PC-3 (cell line): ENCODE measurements at regions of chr12 and their contacts with region 1.

Region 1: GRCh38 chr12:110826592-110827200 is 20.1 kb upstream of the CCDC63 start:
- DNase-seq: peak; percentile 94
- ATAC-seq: peak; percentile 98
- H3K4me3 ChIP-seq: no peak overlapping the region
- H3K27ac ChIP-seq: no peak overlapping the region
- H3K4me1 ChIP-seq: no peaks in the 10 kb centered on the region
- H3K27me3 ChIP-seq: no peaks in the 10 kb centered on the region
- CTCF ChIP-seq: peak; percentile 97

Region 2: GRCh38 chr12:110421159-110421661 is 405.5 kb before region 1 on chr12:
- CTCF ChIA-PET with region 1: no interaction called
- POLR2A ChIA-PET with region 1: no interaction called
- intact Hi-C with region 1: no loop called
- DNase-seq: no peak
- ATAC-seq: no peak
- H3K4me3 ChIP-seq: no peak overlapping the region
- H3K27ac ChIP-seq: no peak overlapping the region
- H3K4me1 ChIP-seq: no peaks in the 10 kb centered on the region
- H3K27me3 ChIP-seq: no peaks in the 10 kb centered on the region
- CTCF ChIP-seq: no peak

Region 3: GRCh38 chr12:110449799-110450497 is 376.7 kb before region 1 on chr12 and contains the start of gene ARPC3:
- CTCF ChIA-PET with region 1: no interaction called
- POLR2A ChIA-PET with region 1: no interaction called
- intact Hi-C with region 1: loop called (anchors 2 kb)
- DNase-seq: peak; percentile 97
- ATAC-seq: peak; percentile 96
- H3K4me3 ChIP-seq: peak within 1 kb of the TSS; percentile 94
- H3K27ac ChIP-seq: peak within 1 kb of the TSS; percentile 75
- H3K4me1 ChIP-seq: 0 out of 2 replicates have a peak, but pooled peaks cover 5% of the 10 kb centered on the region
- H3K27me3 ChIP-seq: no peaks in the 10 kb centered on the region
- CTCF ChIP-seq: peak; percentile 82
- total RNA-seq, gene ARPC3: 202 and 292 TPM in 2 replicates

Region 4: GRCh38 chr12:110613771-110614684 is 212.7 kb before region 1 on chr12 and contains the start of gene TCTN1:
- CTCF ChIA-PET with region 1: no interaction called
- POLR2A ChIA-PET with region 1: no interaction called
- intact Hi-C with region 1: loop called (anchors 5 kb)
- DNase-seq: peak; percentile 97
- ATAC-seq: peak; percentile 99
- H3K4me3 ChIP-seq: peak within 1 kb of the TSS; percentile 75
- H3K27ac ChIP-seq: 0 out of 2 replicates have a peak within 1 kb of the TSS, but pooled peaks have one; percentile 1
- H3K4me1 ChIP-seq: peaks cover 9% of the 10 kb centered on the region
- H3K27me3 ChIP-seq: no peaks in the 10 kb centered on the region
- CTCF ChIP-seq: no peak
- total RNA-seq, gene TCTN1: 40.0 and 40.6 TPM in 2 replicates

Region 5: GRCh38 chr12:110704748-110705147 is 121.9 kb before region 1 on chr12:
- CTCF ChIA-PET with region 1: interaction called, 10 read pairs
- POLR2A ChIA-PET with region 1: no interaction called
- intact Hi-C with region 1: loop called (anchors 1 kb)
- DNase-seq: peak; percentile 68
- ATAC-seq: peak; percentile 86
- H3K4me3 ChIP-seq: peak overlapping the region; percentile 7; the same call in 1 of the 2 replicates
- H3K27ac ChIP-seq: no peak overlapping the region
- H3K4me1 ChIP-seq: 0 out of 2 replicates have a peak, but pooled peaks cover 3% of the 10 kb centered on the region
- H3K27me3 ChIP-seq: no peaks in the 10 kb centered on the region
- CTCF ChIP-seq: peak; percentile 82

Region 6: GRCh38 chr12:110742718-110743570 is 83.8 kb before region 1 on chr12 and contains the start of gene PPP1CC:
- CTCF ChIA-PET with region 1: no interaction called
- POLR2A ChIA-PET with region 1: no interaction called
- intact Hi-C with region 1: loop called (anchors 2 kb)
- DNase-seq: peak; percentile 96
- ATAC-seq: peak; percentile 51
- H3K4me3 ChIP-seq: peak within 1 kb of the TSS; percentile 87
- H3K27ac ChIP-seq: peak within 1 kb of the TSS; percentile 48
- H3K4me1 ChIP-seq: peaks cover 51% of the 10 kb centered on the region
- H3K27me3 ChIP-seq: no peaks in the 10 kb centered on the region
- CTCF ChIP-seq: no peak
- total RNA-seq, gene PPP1CC: 202 and 204 TPM in 2 replicates

Region 7: DNA sequence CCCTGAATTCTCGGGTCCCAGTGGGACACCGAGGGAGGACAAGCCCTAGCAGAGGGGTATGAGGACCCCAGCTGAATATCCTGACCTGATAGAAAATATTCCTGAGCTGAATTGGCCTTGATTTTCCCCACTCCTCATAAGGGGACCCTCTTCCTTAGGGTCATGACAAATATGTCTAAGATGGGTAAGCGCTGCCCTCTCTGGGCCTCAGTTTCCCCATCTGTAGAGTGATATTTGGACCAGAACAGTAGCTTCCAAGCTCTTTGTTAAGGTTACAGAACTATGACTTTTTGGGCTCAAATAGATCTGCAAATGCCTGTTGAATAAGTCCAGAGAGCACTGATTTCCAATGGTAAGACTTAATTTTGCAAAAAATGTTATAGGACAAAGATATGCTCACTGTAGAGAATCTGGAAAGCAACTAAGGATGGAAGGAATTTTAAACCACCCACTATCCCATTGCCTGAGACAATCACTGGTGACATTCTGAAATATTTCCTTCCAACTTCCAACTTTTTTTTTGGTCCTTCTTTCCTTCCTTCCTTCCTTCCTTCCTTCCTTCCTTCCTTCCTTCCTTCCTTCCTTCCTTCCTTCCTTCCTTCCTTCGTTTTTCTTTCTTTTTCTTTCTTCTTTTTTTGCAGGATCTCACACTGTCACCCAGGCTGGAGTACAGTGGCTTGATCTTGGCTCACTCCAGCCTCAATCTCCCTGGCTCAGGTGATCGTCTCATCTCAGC is 61.7 kb after region 1 on chr12:
- CTCF ChIA-PET with region 1: interaction called, 3 read pairs
- POLR2A ChIA-PET with region 1: no interaction called
- intact Hi-C with region 1: loop called (anchors 5 kb)
- DNase-seq: no peak
- ATAC-seq: no peak
- H3K4me3 ChIP-seq: peak overlapping the region; percentile 84; the same call in 1 of the 2 replicates
- H3K27ac ChIP-seq: no peak overlapping the region
- H3K4me1 ChIP-seq: peaks cover 8% of the 10 kb centered on the region; the same call in 1 of the 2 replicates
- H3K27me3 ChIP-seq: no peaks in the 10 kb centered on the region
- CTCF ChIP-seq: no peak; the same call in 1 of the 2 replicates

Region 8: DNA sequence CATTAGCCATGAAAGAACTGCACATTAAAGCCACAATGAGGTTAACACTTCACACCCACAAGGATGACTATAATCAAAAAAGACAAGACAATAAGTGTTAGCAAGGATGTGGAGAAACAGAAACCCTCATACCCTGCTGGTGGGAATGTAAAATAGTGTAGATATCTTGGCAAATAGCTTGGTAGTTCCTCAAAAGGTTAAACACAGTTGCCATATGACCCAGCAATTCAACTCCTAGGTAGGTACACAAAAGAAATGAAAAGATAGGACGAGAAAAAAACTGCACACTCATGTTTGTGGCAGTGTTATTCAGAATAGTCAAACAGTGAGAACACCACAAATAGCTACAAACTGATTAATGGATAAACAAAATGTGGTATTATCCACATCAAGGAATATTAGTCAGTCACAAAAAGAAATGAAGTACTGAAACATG is 678.9 kb after region 1 on chr12:
- CTCF ChIA-PET with region 1: no interaction called
- POLR2A ChIA-PET with region 1: no interaction called
- intact Hi-C with region 1: no loop called
- DNase-seq: no peak
- ATAC-seq: no peak
- H3K4me3 ChIP-seq: no peak overlapping the region
- H3K27ac ChIP-seq: no peak overlapping the region
- H3K4me1 ChIP-seq: no peaks in the 10 kb centered on the region
- H3K27me3 ChIP-seq: no peaks in the 10 kb centered on the region
- CTCF ChIP-seq: no peak